AG04449 (cell line): ENCODE measurements at regions of chr7 and their contacts with region 1.

Region 1: GRCh38 chr7:116588641-116589594 is 64.1 kb downstream of the CAV1 start:
- DNase-seq: no peak
- H3K4me3 ChIP-seq: no peak overlapping the region
- CTCF ChIP-seq: peak; percentile 16

Region 2: GRCh38 chr7:115722302-115722977 is 866.5 kb before region 1 on chr7:
- CTCF ChIA-PET with region 1: no interaction called
- POLR2A ChIA-PET with region 1: no interaction called
- DNase-seq: no peak
- H3K4me3 ChIP-seq: no peak overlapping the region
- CTCF ChIP-seq: no peak

Region 3: GRCh38 chr7:116173051-116174028 is 415.6 kb before region 1 on chr7:
- CTCF ChIA-PET with region 1: interaction called, 71 read pairs
- POLR2A ChIA-PET with region 1: no interaction called
- DNase-seq: no peak
- H3K4me3 ChIP-seq: no peak overlapping the region
- CTCF ChIP-seq: no peak

Region 4: GRCh38 chr7:116242178-116242577 is 346.7 kb before region 1 on chr7:
- CTCF ChIA-PET with region 1: interaction called, 161 read pairs
- POLR2A ChIA-PET with region 1: no interaction called
- DNase-seq: no peak
- H3K4me3 ChIP-seq: no peak overlapping the region
- CTCF ChIP-seq: no peak

Region 5: DNA sequence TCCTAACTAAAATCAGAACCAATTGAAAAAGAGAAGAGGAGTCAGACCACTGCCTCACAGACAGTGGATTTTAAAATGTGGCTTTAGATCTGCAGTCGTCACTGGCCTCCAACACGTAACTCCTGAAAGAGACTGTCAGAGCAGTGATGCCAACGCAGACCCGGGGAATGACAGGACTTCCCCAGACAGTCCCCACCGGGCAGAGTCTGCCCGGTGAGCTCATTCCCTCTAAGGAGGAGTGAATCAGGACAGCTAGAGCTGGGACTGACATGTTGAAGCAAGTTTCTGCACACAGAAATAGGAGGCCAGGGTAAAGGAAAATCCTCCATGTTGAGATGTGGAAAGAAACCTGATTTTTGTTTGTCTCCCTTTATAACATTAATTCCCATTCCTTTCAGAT is 273.6 kb before region 1 on chr7:
- CTCF ChIA-PET with region 1: no interaction called
- POLR2A ChIA-PET with region 1: no interaction called
- DNase-seq: peak; percentile 33
- H3K4me3 ChIP-seq: no peak overlapping the region
- CTCF ChIP-seq: no peak

Region 6: DNA sequence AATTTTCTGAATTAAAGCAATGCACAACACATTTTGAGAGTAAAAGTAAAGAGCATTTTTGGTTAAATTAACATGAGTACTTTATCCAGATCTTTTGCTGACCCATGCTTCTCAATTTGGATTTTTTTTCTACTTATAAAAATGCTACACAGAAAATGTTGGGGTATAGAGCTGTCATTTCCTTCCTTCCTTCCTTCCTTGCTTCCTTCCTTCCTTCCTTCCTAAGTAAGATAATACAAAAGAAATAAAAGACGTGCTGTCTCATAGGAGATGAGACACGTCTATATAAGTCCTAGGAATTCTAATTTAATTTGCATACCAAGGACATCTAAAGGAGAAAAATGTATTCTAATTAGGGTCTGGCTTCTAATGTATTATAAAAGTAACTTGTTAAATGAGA is 120.4 kb before region 1 on chr7:
- CTCF ChIA-PET with region 1: no interaction called
- POLR2A ChIA-PET with region 1: no interaction called
- DNase-seq: no peak
- H3K4me3 ChIP-seq: no peak overlapping the region
- CTCF ChIP-seq: no peak

Region 7: GRCh38 chr7:116490351-116490750 is 98.6 kb before region 1 on chr7:
- CTCF ChIA-PET with region 1: no interaction called
- POLR2A ChIA-PET with region 1: no interaction called
- DNase-seq: no peak
- H3K4me3 ChIP-seq: no peak overlapping the region
- CTCF ChIP-seq: no peak

Region 8: DNA sequence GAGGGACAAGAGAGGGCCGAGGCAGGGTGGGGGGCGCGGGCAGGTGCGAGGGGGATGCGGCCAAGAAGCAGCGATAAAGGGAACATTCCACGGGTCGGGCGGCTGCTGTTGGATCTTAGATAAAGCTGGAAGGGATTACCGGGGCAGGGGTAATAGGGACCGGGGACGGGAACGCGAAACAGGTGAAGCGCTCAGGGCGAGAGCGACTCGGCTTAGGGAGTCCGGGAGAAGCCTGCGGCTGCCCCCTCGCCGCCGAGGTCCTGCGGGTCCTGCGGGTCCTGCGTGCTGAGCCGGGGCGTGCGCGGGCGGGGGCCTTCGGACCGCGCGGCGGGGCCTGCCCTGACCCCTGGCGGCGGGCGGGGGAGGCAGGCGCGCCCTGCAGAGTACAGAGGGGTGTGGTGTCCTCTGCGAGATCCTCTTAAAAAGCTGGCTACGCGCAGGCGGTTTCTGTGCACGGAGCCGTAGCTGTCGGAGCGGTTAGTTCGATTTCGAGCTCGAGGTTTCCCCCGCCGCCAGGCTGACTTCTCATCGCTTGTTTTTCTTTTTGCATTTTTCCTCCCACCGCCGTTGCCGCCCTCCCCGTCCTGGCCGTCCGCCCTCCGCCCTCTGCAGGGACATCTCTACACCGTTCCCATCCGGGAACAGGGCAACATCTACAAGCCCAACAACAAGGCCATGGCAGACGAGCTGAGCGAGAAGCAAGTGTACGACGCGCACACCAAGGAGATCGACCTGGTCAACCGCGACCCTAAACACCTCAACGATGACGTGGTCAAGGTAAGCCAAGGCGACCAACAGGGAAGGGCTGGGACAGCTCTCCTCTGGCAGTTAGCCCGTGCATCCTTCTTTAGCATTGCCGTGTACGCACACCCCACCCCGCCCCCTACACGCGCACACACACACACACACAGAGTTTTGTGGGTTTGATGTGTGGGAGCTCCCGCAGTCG is 62.7 kb before region 1 on chr7:
- CTCF ChIA-PET with region 1: interaction called, 39 read pairs
- POLR2A ChIA-PET with region 1: interaction called, 23 read pairs
- DNase-seq: no peak
- H3K4me3 ChIP-seq: peak overlapping the region; percentile 99
- CTCF ChIP-seq: peak; percentile 77

Region 9: GRCh38 chr7:116601426-116601825 is 12.5 kb after region 1 on chr7:
- CTCF ChIA-PET with region 1: interaction called, 70 read pairs
- POLR2A ChIA-PET with region 1: no interaction called
- DNase-seq: no peak
- H3K4me3 ChIP-seq: no peak overlapping the region
- CTCF ChIP-seq: no peak

Region 10: GRCh38 chr7:116786791-116787443 is 198.0 kb after region 1 on chr7:
- CTCF ChIA-PET with region 1: interaction called, 32 read pairs
- POLR2A ChIA-PET with region 1: no interaction called
- DNase-seq: no peak
- H3K4me3 ChIP-seq: no peak overlapping the region
- CTCF ChIP-seq: no peak

Region 11: DNA sequence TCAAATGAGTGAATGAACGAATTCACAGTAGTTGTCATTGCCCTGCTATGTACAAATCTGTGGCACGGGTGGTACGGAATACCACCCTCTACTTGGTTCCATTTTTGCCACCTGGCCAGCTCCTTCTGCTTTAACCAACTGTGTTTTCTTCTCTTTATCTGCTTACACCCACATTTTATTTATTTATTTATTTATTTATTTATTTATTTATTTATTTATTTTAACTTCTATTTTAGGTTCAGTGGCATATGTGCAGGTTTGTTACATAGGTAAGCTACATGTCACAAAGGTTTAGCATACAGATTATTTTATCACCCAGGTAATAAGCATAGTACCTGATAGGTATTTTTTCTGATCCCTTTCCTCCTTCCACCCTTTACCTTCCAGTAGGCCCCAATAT is 231.2 kb after region 1 on chr7:
- CTCF ChIA-PET with region 1: interaction called, 67 read pairs
- POLR2A ChIA-PET with region 1: no interaction called
- DNase-seq: no peak
- H3K4me3 ChIP-seq: no peak overlapping the region
- CTCF ChIP-seq: no peak